ENCODE measurements at regions of chr2 and their contacts with region 1.

Region 1: DNA sequence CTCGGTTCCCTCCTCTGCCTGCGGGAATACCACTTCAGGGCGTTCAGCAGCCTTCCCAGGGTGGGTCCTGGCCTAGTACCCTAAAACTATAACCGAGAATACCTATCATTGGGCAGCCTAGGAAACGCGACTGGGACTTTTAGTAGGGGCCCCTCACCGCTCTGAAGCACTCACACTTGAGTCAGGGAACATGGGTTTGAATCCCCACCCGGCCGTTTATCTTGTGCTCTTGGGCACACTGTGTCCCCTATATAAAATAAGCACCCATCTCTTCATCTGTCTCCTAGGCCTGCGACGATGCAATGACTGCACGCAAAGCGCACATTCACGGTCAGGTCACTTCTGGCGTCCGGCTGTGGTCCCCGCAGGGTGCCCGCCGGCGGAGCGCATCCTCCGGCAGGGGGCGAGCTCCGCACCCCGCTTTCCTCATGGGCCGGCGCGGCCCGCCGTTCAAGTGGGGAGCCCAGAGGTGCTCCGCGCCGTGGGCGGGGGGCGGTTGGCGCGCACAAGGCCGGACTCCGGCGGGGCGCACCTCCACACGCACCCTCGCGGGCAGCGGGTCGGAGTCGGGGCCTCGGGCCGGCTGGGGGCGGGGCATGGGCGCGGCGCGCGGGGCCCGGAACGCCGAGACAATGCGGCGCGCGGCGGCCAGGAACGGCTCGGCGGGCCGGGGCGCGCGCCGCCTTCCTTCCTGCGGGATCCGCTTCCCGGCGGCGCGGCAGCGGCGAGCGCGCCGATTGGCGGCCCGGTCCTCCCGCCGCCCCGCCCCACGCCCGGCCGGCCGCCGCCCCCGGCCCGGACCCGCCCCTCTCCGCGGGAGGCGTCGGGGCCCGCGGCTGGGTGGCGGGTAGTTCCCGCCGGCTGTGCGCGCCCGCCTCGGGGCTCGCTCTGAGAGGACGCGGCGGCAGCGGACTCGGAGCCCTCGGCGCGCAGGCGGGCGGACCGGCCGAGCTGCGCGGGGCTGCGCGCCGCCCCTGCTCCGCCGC is at the start of gene ASAP2:
- DNase-seq: peak; percentile 77 to 91
- ATAC-seq: peak; percentile 90
- H3K4me3 ChIP-seq: peak within 1 kb of the TSS; percentile 87 to 95
- H3K27ac ChIP-seq: peak within 1 kb of the TSS; percentile 90 to 92
- H3K4me1 ChIP-seq: peaks cover 0 to 4% of the 10 kb centered on the region in 2 donors
- H3K27me3 ChIP-seq: no peaks in the 10 kb centered on the region
- total RNA-seq, gene ASAP2: 55.2 to 72.4 TPM

Region 2: GRCh38 chr2:8628230-8629209 is 577.7 kb before region 1 on chr2:
- intact Hi-C with region 1: no loop called
- DNase-seq: peak; percentile 26 to 43
- ATAC-seq: no peak
- H3K4me3 ChIP-seq: no peak overlapping the region
- H3K27ac ChIP-seq: no peak overlapping the region
- H3K4me1 ChIP-seq: no peaks in the 10 kb centered on the region
- H3K27me3 ChIP-seq: no peaks in the 10 kb centered on the region

Region 3: GRCh38 chr2:9251154-9252001 is 45.1 kb after region 1 on chr2:
- intact Hi-C with region 1: loop called (anchors 5 kb)
- DNase-seq: peak in 1 of 2 donors; percentile 54
- ATAC-seq: no peak
- H3K4me3 ChIP-seq: no peak overlapping the region
- H3K27ac ChIP-seq: peak overlapping the region; percentile 16 to 64
- H3K4me1 ChIP-seq: peaks cover 0 to 8% of the 10 kb centered on the region in 2 donors
- H3K27me3 ChIP-seq: no peaks in the 10 kb centered on the region

Region 4: DNA sequence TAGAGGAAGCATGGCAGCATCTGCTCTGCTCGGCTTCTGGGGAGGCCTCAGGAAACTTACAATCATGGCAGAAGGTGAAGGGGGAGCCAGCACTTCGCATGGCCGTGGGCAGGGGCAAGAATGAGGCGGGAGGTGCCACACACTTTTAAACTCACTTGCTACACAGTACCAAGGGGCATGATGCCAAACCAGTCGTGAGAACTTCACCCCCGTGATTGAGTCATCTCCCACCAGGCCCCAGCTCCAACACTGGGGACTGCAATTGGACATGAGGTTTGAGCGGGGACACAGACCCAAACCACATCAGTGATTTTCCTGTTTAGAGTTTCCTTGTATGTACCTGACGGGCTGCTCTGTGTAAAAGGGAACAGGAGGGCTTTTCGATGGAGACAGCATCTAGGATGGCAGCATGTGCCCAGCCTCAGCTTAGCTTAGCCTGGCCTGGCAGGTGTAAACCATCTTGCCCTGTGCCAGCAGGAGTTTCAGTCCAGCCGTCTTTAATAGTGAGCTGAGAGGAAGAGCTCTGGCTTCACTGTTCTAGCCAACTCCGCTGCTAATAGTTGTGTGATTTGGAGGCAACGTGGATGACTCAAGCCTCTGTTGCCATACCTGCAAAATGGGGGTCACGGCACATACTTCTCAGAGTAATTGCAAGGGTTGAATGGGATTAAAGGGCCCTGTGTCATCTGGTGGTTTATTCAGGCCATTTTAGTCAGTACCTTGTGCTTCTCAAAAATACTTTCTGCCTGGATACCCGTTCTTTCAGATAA is 102.1 kb after region 1 on chr2:
- intact Hi-C with region 1: loop called in 1 of 2 experiments (anchors 5 kb)
- DNase-seq: no peak
- ATAC-seq: no peak
- H3K4me3 ChIP-seq: no peak overlapping the region
- H3K27ac ChIP-seq: peak overlapping the region in 1 of 2 donors; percentile 48
- H3K4me1 ChIP-seq: peaks cover 4 to 7% of the 10 kb centered on the region in 2 donors
- H3K27me3 ChIP-seq: no peaks in the 10 kb centered on the region

Region 5: GRCh38 chr2:9333591-9334171 is 127.4 kb after region 1 on chr2:
- intact Hi-C with region 1: loop called (anchors 2 to 5 kb)
- DNase-seq: peak in 1 of 2 donors; percentile 77
- ATAC-seq: peak; percentile 79
- H3K4me3 ChIP-seq: no peak overlapping the region
- H3K27ac ChIP-seq: peak overlapping the region; percentile 23 to 58
- H3K4me1 ChIP-seq: no peaks in the 10 kb centered on the region
- H3K27me3 ChIP-seq: no peaks in the 10 kb centered on the region

Measured in aorta (tissue), 5 donors.